ENCODE measurements at regions of chr5 and their contacts with region 1.

Region 1: GRCh38 chr5:71955723-71956122 is 151.6 kb upstream of the MAP1B start:
- DNase-seq: peak; percentile 7
- H3K4me3 ChIP-seq: no peak overlapping the region
- H3K27ac ChIP-seq: no peak overlapping the region
- H3K4me1 ChIP-seq: no peaks in the 10 kb centered on the region
- H3K27me3 ChIP-seq: no peaks in the 10 kb centered on the region
- CTCF ChIP-seq: no peak

Region 2: DNA sequence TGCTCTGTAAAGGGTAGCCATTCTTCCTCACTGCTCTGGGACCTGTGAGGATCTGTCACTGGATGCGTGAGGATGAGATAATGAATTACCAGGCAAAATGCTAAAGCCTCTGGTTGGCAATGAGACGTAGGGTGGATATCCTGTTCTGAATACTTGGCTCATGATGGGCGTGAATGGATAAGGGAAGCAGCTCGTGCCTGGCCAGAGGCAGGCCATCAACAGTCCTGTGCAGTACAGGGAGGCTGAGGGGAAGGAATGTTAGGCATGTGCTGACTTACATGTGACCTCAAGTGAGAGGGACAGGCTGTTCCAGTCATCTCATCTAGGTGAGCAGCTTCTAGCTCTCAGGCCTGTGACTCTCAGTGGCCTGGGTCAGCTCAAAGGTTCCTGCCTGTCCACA is 63.9 kb before region 1 on chr5:
- CTCF ChIA-PET with region 1: no interaction called
- dilution Hi-C with region 1: loop called (anchors 5 kb)
- in situ Hi-C with region 1: no loop called
- intact Hi-C with region 1: no loop called
- DNase-seq: peak; percentile 34
- H3K4me3 ChIP-seq: no peak overlapping the region
- H3K27ac ChIP-seq: no peak overlapping the region
- H3K4me1 ChIP-seq: peaks cover 10% of the 10 kb centered on the region
- H3K27me3 ChIP-seq: no peaks in the 10 kb centered on the region
- CTCF ChIP-seq: no peak

Region 3: DNA sequence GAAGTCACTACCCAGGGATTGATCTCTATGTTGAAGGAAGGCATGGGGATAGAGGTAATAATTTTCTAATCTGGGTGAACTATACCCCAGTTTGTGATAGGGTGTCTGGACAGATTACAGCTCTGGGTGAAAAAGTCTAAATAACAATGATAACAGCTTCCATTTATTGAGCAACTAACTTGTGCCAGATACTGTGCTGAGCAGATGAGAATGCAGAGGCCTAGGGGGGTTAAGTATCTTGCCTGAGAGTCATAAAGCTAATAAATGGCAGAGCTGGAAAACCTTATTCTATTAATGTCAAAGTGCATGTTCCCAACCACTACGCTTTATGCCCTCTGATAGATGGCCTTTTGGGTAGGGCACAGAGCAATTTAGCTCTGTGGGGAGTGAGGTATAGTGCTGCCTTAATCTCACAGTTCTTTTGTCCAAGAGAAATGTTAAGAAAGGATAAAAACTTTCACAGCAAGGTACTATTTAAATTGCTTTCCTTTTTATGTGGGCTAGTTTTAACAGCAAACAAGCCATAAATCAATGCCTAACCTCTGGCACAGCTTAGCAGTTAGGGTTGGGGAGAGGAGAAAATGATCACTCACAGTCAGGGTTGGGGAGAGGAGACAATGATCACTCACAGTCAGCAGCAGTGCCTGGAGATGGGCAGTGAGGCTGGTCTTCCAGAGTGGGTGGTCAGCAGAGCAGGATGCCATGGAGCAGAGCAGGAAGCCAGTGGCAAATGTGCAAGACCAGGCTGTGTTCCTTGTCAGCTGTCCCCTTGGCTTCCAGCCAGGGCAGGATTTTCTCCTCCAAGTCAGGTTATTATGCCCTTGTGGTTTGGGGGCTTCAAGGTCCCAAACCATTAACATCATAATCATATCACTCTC is 49.6 kb before region 1 on chr5:
- CTCF ChIA-PET with region 1: no interaction called
- dilution Hi-C with region 1: no loop called
- in situ Hi-C with region 1: no loop called
- intact Hi-C with region 1: loop called (anchors 2 kb)
- DNase-seq: no peak
- H3K4me3 ChIP-seq: no peak overlapping the region
- H3K27ac ChIP-seq: no peak overlapping the region
- H3K4me1 ChIP-seq: peaks cover 17% of the 10 kb centered on the region
- H3K27me3 ChIP-seq: no peaks in the 10 kb centered on the region
- CTCF ChIP-seq: no peak

Region 4: DNA sequence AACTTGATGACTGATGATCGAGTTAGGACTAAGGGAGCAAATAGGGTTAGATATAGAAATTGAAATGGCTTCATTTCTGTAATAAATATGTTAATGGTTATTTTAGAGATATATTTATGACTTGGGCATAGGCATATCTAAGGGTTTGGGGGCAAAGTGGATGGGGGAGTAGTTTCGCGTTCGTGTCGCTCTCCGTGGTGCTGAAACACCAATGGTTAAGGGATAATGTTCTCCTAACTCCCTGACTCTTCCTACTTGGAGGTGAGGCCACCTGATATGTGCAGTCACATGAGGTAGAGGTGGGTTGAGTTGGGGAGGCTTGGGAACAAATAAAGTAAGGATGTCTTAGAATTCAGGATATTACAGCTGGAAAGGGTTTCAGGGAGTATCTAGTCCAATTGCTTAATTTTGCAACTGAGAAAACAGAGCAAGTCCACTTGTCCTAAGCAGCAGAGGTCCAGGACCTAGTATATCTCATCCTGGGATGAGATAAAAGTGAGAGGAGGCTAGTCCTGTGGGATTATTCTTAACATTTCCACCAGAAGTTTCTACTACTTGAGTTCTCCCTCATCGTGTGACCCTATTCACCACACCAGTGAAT is 107.6 kb after region 1 on chr5:
- CTCF ChIA-PET with region 1: no interaction called
- dilution Hi-C with region 1: loop called (anchors 5 kb)
- in situ Hi-C with region 1: no loop called
- intact Hi-C with region 1: no loop called
- DNase-seq: peak; percentile 8
- H3K4me3 ChIP-seq: no peak overlapping the region
- H3K27ac ChIP-seq: no peak overlapping the region
- H3K4me1 ChIP-seq: peaks cover 28% of the 10 kb centered on the region
- H3K27me3 ChIP-seq: no peaks in the 10 kb centered on the region
- CTCF ChIP-seq: no peak